ENCODE measurements at regions of chr20 and their contacts with region 1.

Region 1: DNA sequence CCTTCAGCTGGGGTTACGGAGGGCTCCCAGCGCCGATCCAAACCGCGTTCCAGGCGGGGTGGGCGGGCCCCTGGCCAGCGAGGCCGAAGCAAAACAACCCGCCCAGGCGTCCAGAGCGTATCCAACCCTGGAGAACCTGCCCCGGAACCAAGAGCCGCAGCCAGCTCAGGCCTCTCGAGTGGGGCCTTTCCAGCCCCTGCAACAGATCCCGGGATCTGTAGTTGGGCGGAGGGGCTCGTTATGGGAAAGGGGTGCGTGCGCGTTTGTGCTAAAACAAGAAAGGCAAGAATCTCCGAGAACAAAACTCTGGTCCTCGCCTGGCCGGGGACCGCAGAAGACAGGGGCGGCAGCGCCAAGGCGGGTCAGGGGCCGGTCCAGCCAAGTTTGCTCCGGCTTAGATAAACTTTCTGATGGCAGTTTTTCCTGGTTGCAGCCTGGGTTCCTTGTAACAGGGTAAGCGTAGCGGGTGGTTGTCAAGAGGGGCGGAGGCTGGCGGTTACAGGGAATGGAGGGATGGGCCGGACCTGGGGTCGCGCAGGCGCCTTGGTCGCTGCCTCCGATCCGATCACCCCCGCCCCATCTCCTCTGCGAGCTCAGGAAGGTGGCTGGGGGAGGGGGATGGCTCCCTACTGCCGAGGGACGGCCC is 448 bp upstream of the RIN2 start:
- DNase-seq: peak; percentile 66
- ATAC-seq: peak; percentile 92
- H3K4me3 ChIP-seq: peak overlapping the region; percentile 88 to 91
- H3K27ac ChIP-seq: peak overlapping the region; percentile 93
- H3K4me1 ChIP-seq: peaks cover 23% of the 10 kb centered on the region
- H3K27me3 ChIP-seq: no peaks in the 10 kb centered on the region
- CTCF ChIP-seq: no peak

Region 2: GRCh38 chr20:18702736-18703135 is 1054.9 kb before region 1 on chr20:
- CTCF ChIA-PET with region 1: no interaction called
- POLR2A ChIA-PET with region 1: interaction called, 18 read pairs
- in situ Hi-C with region 1: no loop called
- intact Hi-C with region 1: no loop called
- DNase-seq: no peak
- ATAC-seq: no peak
- H3K4me3 ChIP-seq: no peak overlapping the region
- H3K27ac ChIP-seq: no peak overlapping the region
- H3K4me1 ChIP-seq: no peaks in the 10 kb centered on the region
- H3K27me3 ChIP-seq: no peaks in the 10 kb centered on the region
- CTCF ChIP-seq: no peak

Region 3: GRCh38 chr20:19784511-19785172 is 27.0 kb after region 1 on chr20:
- CTCF ChIA-PET with region 1: no interaction called
- POLR2A ChIA-PET with region 1: no interaction called
- in situ Hi-C with region 1: no loop called
- intact Hi-C with region 1: no loop called
- DNase-seq: peak; percentile 74
- ATAC-seq: peak; percentile 88
- H3K4me3 ChIP-seq: peak overlapping the region in 1 of 2 experiments; percentile 40; a peak in 2 of 4 replicates
- H3K27ac ChIP-seq: peak overlapping the region; percentile 65
- H3K4me1 ChIP-seq: peaks cover 42% of the 10 kb centered on the region
- H3K27me3 ChIP-seq: no peaks in the 10 kb centered on the region
- CTCF ChIP-seq: peak; percentile 85

Region 4: DNA sequence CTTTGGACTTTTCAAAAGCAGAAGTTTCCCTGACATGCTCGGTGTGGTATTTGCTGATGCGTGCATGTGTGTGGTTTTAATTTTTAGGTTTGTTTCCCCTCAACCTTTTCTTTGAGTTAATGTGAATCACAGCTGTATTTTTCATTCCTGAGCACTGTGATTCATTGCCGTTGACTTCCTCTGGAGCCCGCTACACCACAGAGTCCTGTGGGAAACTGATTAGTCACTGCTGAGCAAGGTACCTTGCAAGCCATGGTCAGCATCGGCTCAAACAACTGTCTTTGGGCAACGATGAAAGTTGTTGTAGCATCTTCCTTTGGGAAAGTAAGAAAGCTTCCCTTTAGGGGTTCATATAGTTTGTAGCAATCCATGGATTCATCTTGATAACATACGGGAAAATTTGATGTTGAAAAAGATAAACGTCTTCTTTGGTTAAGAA is 58.0 kb after region 1 on chr20:
- CTCF ChIA-PET with region 1: no interaction called
- POLR2A ChIA-PET with region 1: no interaction called
- in situ Hi-C with region 1: no loop called
- intact Hi-C with region 1: no loop called
- DNase-seq: peak; percentile 93
- ATAC-seq: peak; percentile 100
- H3K4me3 ChIP-seq: no peak overlapping the region
- H3K27ac ChIP-seq: peak overlapping the region; percentile 86
- H3K4me1 ChIP-seq: peaks cover 26% of the 10 kb centered on the region
- H3K27me3 ChIP-seq: no peaks in the 10 kb centered on the region
- CTCF ChIP-seq: peak; percentile 44; the same call in 1 of the 2 replicates

Region 5: GRCh38 chr20:19995220-19995863 is 237.7 kb after region 1 on chr20:
- CTCF ChIA-PET with region 1: no interaction called
- POLR2A ChIA-PET with region 1: interaction called, 10 read pairs
- in situ Hi-C with region 1: no loop called
- intact Hi-C with region 1: no loop called
- DNase-seq: no peak
- ATAC-seq: no peak
- H3K4me3 ChIP-seq: no peak overlapping the region
- H3K27ac ChIP-seq: peak overlapping the region; percentile 99
- H3K4me1 ChIP-seq: peaks cover 57% of the 10 kb centered on the region
- H3K27me3 ChIP-seq: no peaks in the 10 kb centered on the region
- CTCF ChIP-seq: peak; percentile 82; the same call in 1 of the 2 replicates